Caco-2 (cell line): ENCODE measurements at regions of chr11 and their contacts with region 1.

Region 1: DNA sequence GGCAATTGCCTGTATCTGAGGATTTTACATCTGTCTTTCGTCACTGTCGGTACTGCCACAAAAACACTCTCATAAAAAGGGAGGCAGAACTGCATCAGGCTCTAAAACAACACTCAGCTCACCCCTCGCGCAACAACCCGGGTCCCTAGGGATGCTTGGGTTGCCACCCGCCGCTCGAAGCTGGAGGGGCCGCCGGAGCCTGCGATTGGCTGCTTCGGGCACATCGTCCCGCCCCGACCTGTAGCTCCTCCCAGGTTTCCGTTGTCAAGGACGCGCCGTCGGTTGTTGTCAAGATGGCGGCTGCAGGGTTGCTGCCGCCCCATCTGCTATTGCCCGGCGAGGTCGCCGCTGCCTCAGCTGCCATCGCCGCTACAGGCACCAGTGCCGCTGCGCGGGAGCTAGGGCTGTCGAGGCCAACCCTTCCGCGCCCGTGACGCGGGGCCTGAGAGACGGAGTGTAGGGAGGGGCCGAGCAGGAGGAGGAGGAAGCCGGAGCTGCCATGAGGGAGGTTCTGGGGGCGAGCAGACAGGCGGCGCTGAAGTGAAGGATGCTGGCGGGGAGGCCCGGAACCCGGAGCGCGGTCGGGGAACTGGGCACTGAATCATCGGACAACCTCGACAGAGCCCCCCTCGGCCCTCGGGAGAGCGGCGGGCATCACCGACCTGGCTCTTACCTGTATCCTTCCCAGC is at the start of gene CEP126:
- DNase-seq: peak; percentile 97 to 98
- H3K4me3 ChIP-seq: peak within 1 kb of the TSS; percentile 66
- H3K4me3 Mint-ChIP-seq: peak within 1 kb of the TSS; percentile 92
- H3K27ac Mint-ChIP-seq: peak within 1 kb of the TSS; percentile 94
- H3K4me1 ChIP-seq: peaks cover 31% of the 10 kb centered on the region
- H3K4me1 Mint-ChIP-seq: peaks cover 41% of the 10 kb centered on the region
- H3K27me3 ChIP-seq: no peaks in the 10 kb centered on the region
- H3K27me3 Mint-ChIP-seq: no peaks in the 10 kb centered on the region
- CTCF ChIP-seq: peak; percentile 27 to 94
- total RNA-seq, gene CEP126: 4.3 and 4.6 TPM in 2 replicates

Region 2: DNA sequence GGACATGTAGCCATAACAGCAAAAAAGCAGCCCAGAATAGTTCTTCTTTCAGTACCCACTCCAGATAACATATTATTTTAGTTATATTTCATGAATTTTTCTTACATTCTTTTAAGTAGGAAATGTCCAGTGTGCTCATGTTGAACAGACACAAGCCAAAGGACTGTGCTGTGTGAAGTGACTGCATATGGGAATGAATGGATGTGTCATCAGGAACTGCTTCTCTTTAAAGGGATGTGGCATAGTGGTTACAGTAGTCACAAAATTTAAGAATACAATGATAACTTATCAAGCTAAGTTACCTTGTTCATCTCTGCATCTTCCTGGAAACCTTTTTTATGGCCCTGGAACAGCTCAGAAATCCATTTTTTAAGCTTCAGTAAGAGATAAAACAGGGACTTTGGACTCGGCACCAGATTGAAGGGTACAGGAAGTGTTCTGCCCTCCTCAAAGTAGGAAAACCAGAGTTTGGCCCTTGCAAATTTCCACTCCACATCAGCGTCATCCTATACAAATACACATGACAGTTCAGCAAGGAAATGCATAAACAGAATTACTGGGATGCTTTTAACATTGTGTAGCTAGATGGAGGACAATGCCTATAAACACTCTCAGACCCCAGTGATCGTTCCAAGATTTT is 443.9 kb before region 1 on chr11:
- CTCF ChIA-PET with region 1: interaction called, 3 read pairs
- POLR2A ChIA-PET with region 1: no interaction called
- intact Hi-C with region 1: loop called (anchors 2 kb)
- DNase-seq: peak; percentile 78 to 89
- H3K4me3 ChIP-seq: peak overlapping the region; percentile 24
- H3K4me3 Mint-ChIP-seq: peak overlapping the region; percentile 54
- H3K27ac Mint-ChIP-seq: peak overlapping the region; percentile 77
- H3K4me1 ChIP-seq: peaks cover 29% of the 10 kb centered on the region
- H3K4me1 Mint-ChIP-seq: peaks cover 28% of the 10 kb centered on the region
- H3K27me3 ChIP-seq: no peaks in the 10 kb centered on the region
- H3K27me3 Mint-ChIP-seq: no peaks in the 10 kb centered on the region
- CTCF ChIP-seq: no peak

Region 3: GRCh38 chr11:101617735-101618332 is 297.0 kb before region 1 on chr11:
- CTCF ChIA-PET with region 1: no interaction called
- POLR2A ChIA-PET with region 1: no interaction called
- intact Hi-C with region 1: no loop called
- DNase-seq: no peak
- H3K4me3 ChIP-seq: no peak overlapping the region
- H3K4me3 Mint-ChIP-seq: no peak overlapping the region
- H3K27ac Mint-ChIP-seq: no peak overlapping the region
- H3K4me1 ChIP-seq: no peaks in the 10 kb centered on the region
- H3K4me1 Mint-ChIP-seq: no peaks in the 10 kb centered on the region
- H3K27me3 ChIP-seq: no peaks in the 10 kb centered on the region; the same call in 1 of the 2 replicates
- H3K27me3 Mint-ChIP-seq: peaks cover 10% of the 10 kb centered on the region
- CTCF ChIP-seq: no peak

Region 4: GRCh38 chr11:101880222-101880621 is 34.7 kb before region 1 on chr11:
- CTCF ChIA-PET with region 1: interaction called, 6 read pairs
- POLR2A ChIA-PET with region 1: no interaction called
- intact Hi-C with region 1: loop called (anchors 1 kb)
- DNase-seq: peak; percentile 42 to 77
- H3K4me3 ChIP-seq: no peak overlapping the region
- H3K4me3 Mint-ChIP-seq: no peak overlapping the region
- H3K27ac Mint-ChIP-seq: no peak overlapping the region
- H3K4me1 ChIP-seq: peaks cover 8% of the 10 kb centered on the region
- H3K4me1 Mint-ChIP-seq: peaks cover 11% of the 10 kb centered on the region
- H3K27me3 ChIP-seq: no peaks in the 10 kb centered on the region
- H3K27me3 Mint-ChIP-seq: no peaks in the 10 kb centered on the region
- CTCF ChIP-seq: peak; percentile 66 to 90

Region 5: GRCh38 chr11:101963236-101963635 is 48.4 kb after region 1 on chr11:
- CTCF ChIA-PET with region 1: no interaction called
- POLR2A ChIA-PET with region 1: no interaction called
- intact Hi-C with region 1: loop called (anchors 2 kb)
- DNase-seq: no peak
- H3K4me3 ChIP-seq: no peak overlapping the region
- H3K4me3 Mint-ChIP-seq: no peak overlapping the region
- H3K27ac Mint-ChIP-seq: no peak overlapping the region
- H3K4me1 ChIP-seq: peaks cover 5% of the 10 kb centered on the region; the same call in 1 of the 2 replicates
- H3K4me1 Mint-ChIP-seq: peaks cover 7% of the 10 kb centered on the region
- H3K27me3 ChIP-seq: no peaks in the 10 kb centered on the region
- H3K27me3 Mint-ChIP-seq: no peaks in the 10 kb centered on the region
- CTCF ChIP-seq: no peak

Region 6: GRCh38 chr11:102109896-102110760 is 195.2 kb after region 1 on chr11 and contains the start of gene YAP1:
- CTCF ChIA-PET with region 1: no interaction called
- POLR2A ChIA-PET with region 1: no interaction called
- intact Hi-C with region 1: loop called (anchors 2 kb)
- DNase-seq: peak; percentile 97 to 99
- H3K4me3 ChIP-seq: peak within 1 kb of the TSS; percentile 96
- H3K4me3 Mint-ChIP-seq: peak within 1 kb of the TSS; percentile 91
- H3K27ac Mint-ChIP-seq: peak within 1 kb of the TSS; percentile 98
- H3K4me1 ChIP-seq: peaks cover 20% of the 10 kb centered on the region
- H3K4me1 Mint-ChIP-seq: peaks cover 16% of the 10 kb centered on the region
- H3K27me3 ChIP-seq: no peaks in the 10 kb centered on the region
- H3K27me3 Mint-ChIP-seq: no peaks in the 10 kb centered on the region
- CTCF ChIP-seq: no peak
- total RNA-seq, gene YAP1: 207 and 227 TPM in 2 replicates

Region 7: DNA sequence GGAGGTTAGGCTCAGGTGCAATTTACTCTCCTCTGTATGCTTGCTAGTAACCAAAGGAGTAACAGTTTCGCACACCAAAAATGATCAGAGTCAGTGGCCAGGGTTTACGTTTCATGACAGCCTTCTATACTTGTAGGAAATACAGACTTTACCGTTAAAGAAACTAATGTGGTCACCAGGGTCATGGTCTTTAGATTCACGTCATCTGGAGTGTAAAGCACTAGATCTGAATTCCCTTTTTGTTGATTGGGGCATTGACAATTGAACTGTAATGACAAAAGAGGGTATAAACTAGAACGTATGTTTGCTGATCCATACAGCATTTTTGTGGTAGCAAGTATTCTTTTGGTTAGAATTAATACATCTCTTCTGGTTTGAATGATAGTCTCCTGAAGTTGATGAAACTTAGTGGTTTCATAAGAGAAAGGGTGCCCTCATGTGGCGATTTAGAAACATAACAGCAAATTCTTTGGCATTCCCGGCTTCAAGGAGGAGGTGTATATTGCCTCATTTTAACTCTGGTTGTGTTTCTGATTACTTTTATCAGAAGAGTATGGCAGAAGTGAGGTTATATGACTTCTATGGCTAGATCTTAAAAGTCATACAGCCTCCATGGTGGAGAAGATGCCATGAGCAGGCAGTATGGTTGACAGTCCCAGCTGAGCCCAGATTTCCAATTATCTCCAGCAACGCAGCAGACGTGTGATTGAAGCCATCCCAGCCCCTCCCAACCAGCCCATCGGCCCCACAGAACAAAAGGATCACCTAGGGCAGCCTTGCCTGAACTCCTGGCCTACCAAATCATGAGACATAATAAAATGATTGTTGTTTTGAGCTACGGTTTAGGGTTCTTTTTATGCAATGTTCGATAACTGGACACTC is 580.5 kb after region 1 on chr11:
- CTCF ChIA-PET with region 1: no interaction called
- POLR2A ChIA-PET with region 1: no interaction called
- intact Hi-C with region 1: loop called (anchors 1 kb)
- DNase-seq: peak; percentile 57 to 81
- H3K4me3 ChIP-seq: no peak overlapping the region
- H3K4me3 Mint-ChIP-seq: peak overlapping the region; percentile 34
- H3K27ac Mint-ChIP-seq: peak overlapping the region; percentile 72
- H3K4me1 ChIP-seq: peaks cover 33% of the 10 kb centered on the region
- H3K4me1 Mint-ChIP-seq: peaks cover 25% of the 10 kb centered on the region
- H3K27me3 ChIP-seq: no peaks in the 10 kb centered on the region
- H3K27me3 Mint-ChIP-seq: no peaks in the 10 kb centered on the region
- CTCF ChIP-seq: peak; percentile 82 to 93